MCF 10A (cell line): ENCODE measurements at regions of chr19 and their contacts with region 1.

Region 1: GRCh38 chr19:57903618-57904184 is 12.7 kb downstream of the ZNF417 start:
- DNase-seq: no peak
- H3K4me3 Mint-ChIP-seq: no peak overlapping the region
- H3K27ac Mint-ChIP-seq: no peak overlapping the region
- H3K4me1 Mint-ChIP-seq: no peaks in the 10 kb centered on the region
- H3K27me3 Mint-ChIP-seq: no peaks in the 10 kb centered on the region
- CTCF ChIP-seq: no peak

Region 2: DNA sequence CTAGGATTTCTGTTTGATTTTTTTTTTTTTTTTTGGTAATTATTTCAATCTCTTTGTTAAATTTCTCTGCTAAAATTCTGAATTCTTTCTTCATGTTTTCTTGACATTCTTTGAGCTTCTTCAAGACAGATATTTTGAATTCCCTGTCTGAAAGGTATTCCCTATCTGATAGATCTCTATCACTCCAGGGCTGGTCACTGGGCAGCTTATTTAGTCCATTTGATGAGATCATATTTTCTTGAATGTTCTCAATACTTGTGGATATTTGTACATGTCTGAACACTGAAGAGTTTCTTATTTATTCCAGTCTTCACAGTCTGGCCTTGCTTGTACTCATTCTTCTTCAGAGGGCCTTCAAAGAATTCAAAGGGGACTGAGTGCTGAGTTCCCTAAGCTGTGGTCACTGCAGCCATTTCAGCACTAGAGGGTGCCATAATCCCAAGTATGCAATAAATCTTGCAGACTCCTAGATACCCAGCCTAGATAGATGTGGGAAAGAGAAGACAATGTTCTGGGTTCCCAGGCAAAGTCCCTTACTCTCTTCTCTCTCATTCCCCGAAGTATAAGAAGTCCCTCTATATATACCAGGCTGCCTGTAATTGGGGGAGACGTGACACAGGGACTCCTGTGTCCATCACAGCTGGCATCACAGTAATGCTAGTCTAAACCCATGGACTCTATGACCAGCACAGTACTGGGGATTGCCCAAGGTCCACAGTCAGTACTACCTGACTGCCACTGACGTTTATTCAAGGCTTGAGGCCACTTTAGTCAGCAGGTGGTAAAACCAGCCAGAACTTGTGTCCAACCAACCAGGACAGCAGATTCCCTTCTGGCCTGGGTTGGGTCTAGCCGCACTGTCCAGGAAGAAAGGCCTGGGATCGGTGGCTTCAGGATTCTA is 438.0 kb before region 1 on chr19:
- CTCF ChIA-PET with region 1: interaction called, 12 read pairs
- POLR2A ChIA-PET with region 1: no interaction called
- intact Hi-C with region 1: no loop called
- DNase-seq: peak; percentile 45
- H3K4me3 Mint-ChIP-seq: no peak overlapping the region
- H3K27ac Mint-ChIP-seq: no peak overlapping the region
- H3K4me1 Mint-ChIP-seq: no peaks in the 10 kb centered on the region
- H3K27me3 Mint-ChIP-seq: no peaks in the 10 kb centered on the region
- CTCF ChIP-seq: peak; percentile 51

Region 3: GRCh38 chr19:57759096-57759495 is 144.6 kb before region 1 on chr19:
- CTCF ChIA-PET with region 1: no interaction called
- POLR2A ChIA-PET with region 1: no interaction called
- intact Hi-C with region 1: no loop called
- DNase-seq: no peak
- H3K4me3 Mint-ChIP-seq: no peak overlapping the region
- H3K27ac Mint-ChIP-seq: no peak overlapping the region
- H3K4me1 Mint-ChIP-seq: no peaks in the 10 kb centered on the region
- H3K27me3 Mint-ChIP-seq: no peaks in the 10 kb centered on the region
- CTCF ChIP-seq: no peak

Region 4: GRCh38 chr19:57978586-57979289 is 75.0 kb after region 1 on chr19:
- CTCF ChIA-PET with region 1: no interaction called
- POLR2A ChIA-PET with region 1: no interaction called
- intact Hi-C with region 1: no loop called
- DNase-seq: peak; percentile 0
- H3K4me3 Mint-ChIP-seq: no peak overlapping the region
- H3K27ac Mint-ChIP-seq: no peak overlapping the region
- H3K4me1 Mint-ChIP-seq: no peaks in the 10 kb centered on the region
- H3K27me3 Mint-ChIP-seq: no peaks in the 10 kb centered on the region
- CTCF ChIP-seq: no peak